Activated CD4-positive, alpha-beta T cell treated with anti-CD3 and anti-CD28 coated beads for 36 hours (primary cell): ENCODE measurements at regions of chr11 and their contacts with region 1.

Region 1: GRCh38 chr11:3854977-3855807 is at the start of gene STIM1:
- DNase-seq: peak; percentile 99
- ATAC-seq: peak; percentile 76
- H3K4me3 Mint-ChIP-seq: peak within 1 kb of the TSS; percentile 88
- H3K27ac Mint-ChIP-seq: peak within 1 kb of the TSS; percentile 99
- H3K4me1 Mint-ChIP-seq: peaks cover 56% of the 10 kb centered on the region
- H3K27me3 Mint-ChIP-seq: no peaks in the 10 kb centered on the region
- total RNA-seq, gene STIM1: 60.0 to 62.6 TPM

Region 2: DNA sequence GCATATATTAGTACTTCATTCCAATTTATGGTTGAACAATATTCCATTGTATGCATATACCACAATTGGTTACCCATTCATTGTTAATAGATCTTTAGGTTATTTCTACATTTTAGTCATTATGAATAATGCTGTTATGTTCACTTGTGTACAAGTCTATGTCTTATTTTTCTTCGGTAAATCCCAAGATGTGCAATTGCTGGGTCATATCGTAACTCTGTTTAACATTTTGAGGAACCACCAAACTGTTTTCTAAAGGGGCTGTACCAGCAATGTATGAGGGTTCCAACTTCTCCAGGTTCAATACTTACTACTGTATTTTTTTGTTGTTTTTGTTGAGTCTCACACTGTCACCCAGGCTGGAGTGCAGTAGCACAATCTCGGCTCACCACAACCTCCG is 90.9 kb before region 1 on chr11:
- CTCF ChIA-PET with region 1: no interaction called
- POLR2A ChIA-PET with region 1: no interaction called
- intact Hi-C with region 1: no loop called
- DNase-seq: no peak
- ATAC-seq: no peak
- H3K4me3 Mint-ChIP-seq: no peak overlapping the region
- H3K27ac Mint-ChIP-seq: no peak overlapping the region
- H3K4me1 Mint-ChIP-seq: no peaks in the 10 kb centered on the region
- H3K27me3 Mint-ChIP-seq: no peaks in the 10 kb centered on the region

Region 3: GRCh38 chr11:3841426-3842350 is 13.5 kb before region 1 on chr11:
- CTCF ChIA-PET with region 1: interaction called, 218 read pairs
- POLR2A ChIA-PET with region 1: interaction called, 69 read pairs
- intact Hi-C with region 1: loop called (anchors 1 kb)
- DNase-seq: peak; percentile 97
- ATAC-seq: peak; percentile 30
- H3K4me3 Mint-ChIP-seq: peak overlapping the region; percentile 93
- H3K27ac Mint-ChIP-seq: peak overlapping the region; percentile 93
- H3K4me1 Mint-ChIP-seq: peaks cover 54% of the 10 kb centered on the region
- H3K27me3 Mint-ChIP-seq: no peaks in the 10 kb centered on the region

Region 4: GRCh38 chr11:3880724-3881123 is 25.5 kb after region 1 on chr11:
- CTCF ChIA-PET with region 1: interaction called, 16 read pairs
- POLR2A ChIA-PET with region 1: interaction called, 3 read pairs
- intact Hi-C with region 1: no loop called
- DNase-seq: no peak
- ATAC-seq: no peak
- H3K4me3 Mint-ChIP-seq: no peak overlapping the region
- H3K27ac Mint-ChIP-seq: peak overlapping the region; percentile 79
- H3K4me1 Mint-ChIP-seq: peaks cover 76% of the 10 kb centered on the region
- H3K27me3 Mint-ChIP-seq: no peaks in the 10 kb centered on the region

Region 5: DNA sequence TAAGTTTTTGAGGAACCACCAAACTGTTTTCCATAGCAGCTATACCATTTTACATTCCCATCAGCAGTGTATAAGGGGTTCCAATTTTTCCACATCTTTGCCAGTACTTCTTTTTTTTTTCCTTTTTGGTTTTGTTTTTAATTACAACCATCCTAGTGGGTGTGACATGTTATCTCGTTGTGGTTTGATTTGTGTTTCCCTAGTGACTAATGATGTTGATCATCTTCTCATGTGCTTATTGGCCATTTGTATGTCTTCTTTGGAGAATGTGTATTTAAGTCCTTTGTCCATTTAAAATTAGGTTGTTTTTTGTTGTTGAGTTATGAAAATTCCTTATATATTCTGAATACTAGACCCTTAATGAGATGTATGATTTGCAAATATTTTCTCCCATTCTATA is 59.6 kb after region 1 on chr11:
- CTCF ChIA-PET with region 1: interaction called, 4 read pairs
- POLR2A ChIA-PET with region 1: interaction called, 3 read pairs
- intact Hi-C with region 1: loop called in 1 of 2 experiments (anchors 1 kb)
- DNase-seq: no peak
- ATAC-seq: no peak
- H3K4me3 Mint-ChIP-seq: no peak overlapping the region
- H3K27ac Mint-ChIP-seq: no peak overlapping the region
- H3K4me1 Mint-ChIP-seq: peaks cover 64% of the 10 kb centered on the region
- H3K27me3 Mint-ChIP-seq: no peaks in the 10 kb centered on the region

Region 6: GRCh38 chr11:3959015-3959919 is 104.1 kb after region 1 on chr11:
- CTCF ChIA-PET with region 1: interaction called, 13 read pairs
- POLR2A ChIA-PET with region 1: no interaction called
- intact Hi-C with region 1: loop called (anchors 2 kb)
- DNase-seq: no peak
- ATAC-seq: peak; percentile 73
- H3K4me3 Mint-ChIP-seq: no peak overlapping the region
- H3K27ac Mint-ChIP-seq: peak overlapping the region; percentile 10
- H3K4me1 Mint-ChIP-seq: peaks cover 87% of the 10 kb centered on the region
- H3K27me3 Mint-ChIP-seq: no peaks in the 10 kb centered on the region

Region 7: GRCh38 chr11:3995949-3996554 is 140.9 kb after region 1 on chr11:
- CTCF ChIA-PET with region 1: interaction called, 12 read pairs
- POLR2A ChIA-PET with region 1: no interaction called
- intact Hi-C with region 1: no loop called
- DNase-seq: no peak
- ATAC-seq: no peak
- H3K4me3 Mint-ChIP-seq: no peak overlapping the region
- H3K27ac Mint-ChIP-seq: no peak overlapping the region
- H3K4me1 Mint-ChIP-seq: peaks cover 33% of the 10 kb centered on the region
- H3K27me3 Mint-ChIP-seq: no peaks in the 10 kb centered on the region

Region 8: DNA sequence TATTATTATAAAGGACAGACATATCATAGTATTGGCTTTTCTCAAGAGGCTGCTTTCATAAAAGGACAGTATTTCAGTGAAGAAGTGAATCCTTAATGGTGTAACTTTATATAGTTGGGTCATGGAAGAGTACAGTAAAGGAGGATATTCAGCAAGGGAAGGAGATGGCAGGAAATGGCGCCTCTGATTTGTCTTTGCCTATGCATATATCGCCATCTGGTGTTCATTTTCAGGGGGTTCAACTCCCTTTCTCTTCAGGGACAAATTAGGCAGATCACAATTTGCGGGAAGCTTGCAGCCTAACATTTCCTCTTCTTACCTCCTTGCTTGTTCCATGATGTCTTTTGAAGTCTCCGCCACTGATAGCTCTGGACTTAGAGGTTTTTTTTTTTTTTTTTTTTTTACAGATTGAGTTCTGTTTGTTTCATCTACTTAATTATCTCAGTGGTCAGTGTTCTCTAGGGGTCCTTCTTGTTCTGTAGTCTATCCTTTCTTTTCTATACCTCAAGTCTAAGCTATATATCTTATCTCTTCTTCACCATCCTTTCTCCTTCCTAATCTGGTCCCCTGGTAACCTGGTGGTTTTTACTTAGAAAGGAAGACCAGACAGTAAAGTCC is 217.6 kb after region 1 on chr11:
- CTCF ChIA-PET with region 1: interaction called, 299 read pairs
- POLR2A ChIA-PET with region 1: interaction called, 3 read pairs
- intact Hi-C with region 1: loop called in 1 of 2 experiments (anchors 1 kb)
- DNase-seq: peak; percentile 62
- ATAC-seq: peak; percentile 75
- H3K4me3 Mint-ChIP-seq: no peak overlapping the region
- H3K27ac Mint-ChIP-seq: no peak overlapping the region
- H3K4me1 Mint-ChIP-seq: peaks cover 48% of the 10 kb centered on the region
- H3K27me3 Mint-ChIP-seq: no peaks in the 10 kb centered on the region